Aorta (tissue), 5 donors: ENCODE measurements at regions of chr9 and their contacts with region 1.

Region 1: GRCh38 chr9:36487482-36488388 is 85.0 kb upstream of the MELK start:
- DNase-seq: peak; percentile 95
- ATAC-seq: peak; percentile 99
- H3K4me3 ChIP-seq: peak overlapping the region; percentile 95 to 100
- H3K27ac ChIP-seq: peak overlapping the region; percentile 93 to 94
- H3K4me1 ChIP-seq: peaks cover 0 to 4% of the 10 kb centered on the region in 2 donors
- H3K27me3 ChIP-seq: no peaks in the 10 kb centered on the region

Region 2: DNA sequence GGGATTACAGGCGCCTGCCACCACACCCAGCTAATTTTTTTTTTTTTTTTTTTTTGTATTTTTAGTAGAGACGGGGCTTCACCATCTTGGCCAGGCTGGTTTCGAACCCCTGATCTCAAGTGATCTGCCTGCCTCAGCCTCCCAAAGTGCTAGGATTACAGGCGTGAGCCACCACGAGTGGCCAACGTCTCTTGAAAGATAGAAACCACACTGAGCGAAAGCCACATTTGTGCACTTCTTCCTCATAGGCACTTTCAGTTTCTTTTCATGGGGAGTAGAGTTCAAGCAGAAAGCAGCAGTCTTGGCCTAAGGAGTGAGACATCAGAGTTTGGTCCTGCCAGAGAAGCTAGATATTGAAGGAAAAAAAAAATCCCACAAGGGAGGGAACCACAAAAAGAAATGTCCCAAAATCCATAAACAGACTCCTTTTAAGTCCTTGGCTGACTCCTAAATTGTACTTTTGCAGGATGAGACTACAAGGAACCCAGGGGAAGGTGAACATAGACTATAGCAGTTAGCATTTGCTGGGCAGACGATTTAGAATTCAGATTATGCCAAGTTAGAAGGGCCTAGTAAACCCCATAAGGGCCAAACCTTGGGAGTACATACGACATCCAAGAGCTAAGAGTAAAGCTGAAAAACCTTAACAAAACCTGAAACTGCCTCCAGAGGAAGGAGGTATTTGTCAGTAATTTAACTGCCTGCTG is 395.1 kb before region 1 on chr9:
- intact Hi-C with region 1: no loop called
- DNase-seq: no peak
- ATAC-seq: no peak
- H3K4me3 ChIP-seq: no peak overlapping the region
- H3K27ac ChIP-seq: no peak overlapping the region
- H3K4me1 ChIP-seq: peaks cover 0 to 2% of the 10 kb centered on the region in 2 donors
- H3K27me3 ChIP-seq: no peaks in the 10 kb centered on the region

Region 3: GRCh38 chr9:36400332-36401163 is 87.2 kb before region 1 on chr9:
- intact Hi-C with region 1: loop called (anchors 2 to 10 kb)
- DNase-seq: peak; percentile 92 to 95
- ATAC-seq: peak; percentile 96
- H3K4me3 ChIP-seq: peak overlapping the region; percentile 61 to 73
- H3K27ac ChIP-seq: peak overlapping the region in 1 of 2 donors; percentile 78
- H3K4me1 ChIP-seq: no peaks in the 10 kb centered on the region
- H3K27me3 ChIP-seq: no peaks in the 10 kb centered on the region

Region 4: GRCh38 chr9:36423206-36423605 is 64.5 kb before region 1 on chr9:
- intact Hi-C with region 1: no loop called
- DNase-seq: no peak
- ATAC-seq: no peak
- H3K4me3 ChIP-seq: no peak overlapping the region
- H3K27ac ChIP-seq: no peak overlapping the region
- H3K4me1 ChIP-seq: no peaks in the 10 kb centered on the region
- H3K27me3 ChIP-seq: no peaks in the 10 kb centered on the region

Region 5: GRCh38 chr9:36551129-36551528 is 63.4 kb after region 1 on chr9:
- intact Hi-C with region 1: loop called in 1 of 2 experiments (anchors 10 kb)
- DNase-seq: no peak
- ATAC-seq: no peak
- H3K4me3 ChIP-seq: no peak overlapping the region
- H3K27ac ChIP-seq: no peak overlapping the region
- H3K4me1 ChIP-seq: no peaks in the 10 kb centered on the region
- H3K27me3 ChIP-seq: no peaks in the 10 kb centered on the region